Activated CD8-positive, alpha-beta T cell treated with anti-CD3 and anti-CD28 coated beads for 36 hours (primary cell): ENCODE measurements at regions of chr11 and their contacts with region 1.

Region 1: DNA sequence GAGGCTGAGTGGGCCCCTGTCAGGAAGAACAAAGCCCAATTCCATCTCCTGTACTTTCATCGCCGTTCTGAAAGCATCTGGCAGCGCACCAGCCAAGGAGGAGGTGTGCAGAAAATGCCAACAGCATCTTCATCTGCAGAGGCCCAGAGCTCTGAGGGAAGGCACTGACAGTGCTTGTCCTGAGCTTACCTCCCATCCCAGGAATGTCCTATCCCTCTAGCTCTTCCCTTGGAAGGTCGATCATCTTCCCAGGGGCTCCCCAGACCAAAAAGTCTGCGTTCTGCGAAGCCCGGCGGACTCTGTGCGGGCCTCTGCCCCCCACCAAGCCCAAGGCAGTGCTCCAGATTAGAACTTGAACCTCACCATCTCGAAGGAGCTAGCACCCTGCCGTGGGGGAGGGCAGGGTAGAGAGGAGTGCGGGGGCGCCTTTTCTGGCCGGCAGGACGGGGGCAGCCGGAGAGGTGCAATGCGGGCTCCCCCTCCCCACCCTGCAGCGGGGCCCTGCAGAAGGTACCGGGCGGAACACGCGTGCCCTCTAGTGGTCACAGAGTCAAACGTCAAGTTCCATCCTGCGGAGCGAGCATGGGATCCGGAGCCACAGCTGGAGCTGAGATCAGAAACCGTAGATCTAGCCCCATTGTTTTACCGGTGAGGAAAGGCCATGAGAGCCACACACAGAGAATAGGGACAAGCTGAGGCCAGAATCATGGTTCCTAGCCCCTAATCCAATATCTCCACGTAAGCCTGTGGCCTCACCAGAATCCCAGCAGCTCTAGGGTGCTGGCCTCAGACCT is 5.0 kb downstream of the SCN2B start:
- DNase-seq: peak; percentile 84
- ATAC-seq: peak; percentile 98
- H3K4me3 Mint-ChIP-seq: no peak overlapping the region
- H3K27ac Mint-ChIP-seq: no peak overlapping the region
- H3K4me1 Mint-ChIP-seq: peaks cover 2% of the 10 kb centered on the region
- H3K27me3 Mint-ChIP-seq: peaks cover 5% of the 10 kb centered on the region
- CTCF ChIP-seq: peak; percentile 94

Region 2: DNA sequence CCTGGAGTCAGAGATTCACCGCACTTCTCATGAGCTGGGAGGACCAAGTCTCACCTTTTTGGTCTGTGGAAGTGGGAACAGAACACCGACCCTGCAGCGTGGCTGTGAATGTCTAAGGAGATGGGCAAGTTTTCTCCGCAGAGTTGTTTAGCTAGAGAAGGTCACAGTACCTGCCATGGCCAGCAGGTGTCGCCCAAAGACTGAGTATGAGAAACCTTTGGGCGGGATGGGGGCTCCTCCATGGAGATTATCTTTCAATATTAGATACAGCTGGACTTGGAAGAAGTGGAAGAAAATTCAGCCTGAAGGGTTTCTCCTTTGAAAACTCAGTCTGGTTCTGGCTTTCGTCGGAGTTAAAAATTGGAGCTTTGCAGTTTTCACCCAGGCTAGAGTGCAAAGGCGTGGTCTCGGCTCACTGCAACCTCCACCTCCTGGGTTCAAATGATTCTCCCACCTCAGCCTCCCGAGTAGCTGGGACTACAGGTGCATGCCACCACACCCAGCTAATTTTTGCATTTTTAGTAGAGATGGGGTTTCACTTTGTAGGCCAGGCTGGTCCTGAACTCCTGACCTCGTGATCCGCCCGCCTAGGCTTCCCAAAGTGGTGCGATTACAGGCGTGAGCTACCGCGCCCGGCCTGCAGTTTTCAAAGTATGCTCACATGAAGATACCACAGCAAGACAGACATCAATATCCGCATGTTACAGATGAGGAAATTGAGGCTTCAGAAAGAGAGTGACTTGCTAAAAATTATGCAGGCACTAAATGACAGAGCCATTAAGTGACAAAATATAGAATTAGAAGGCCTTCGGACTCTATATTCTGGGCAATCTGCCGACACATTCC is 363.8 kb before region 1 on chr11:
- CTCF ChIA-PET with region 1: interaction called, 15 read pairs
- POLR2A ChIA-PET with region 1: no interaction called
- intact Hi-C with region 1: no loop called
- DNase-seq: peak; percentile 91
- ATAC-seq: peak; percentile 74
- H3K4me3 Mint-ChIP-seq: no peak overlapping the region
- H3K27ac Mint-ChIP-seq: no peak overlapping the region
- H3K4me1 Mint-ChIP-seq: peaks cover 16% of the 10 kb centered on the region
- H3K27me3 Mint-ChIP-seq: no peaks in the 10 kb centered on the region
- CTCF ChIP-seq: peak; percentile 99

Region 3: DNA sequence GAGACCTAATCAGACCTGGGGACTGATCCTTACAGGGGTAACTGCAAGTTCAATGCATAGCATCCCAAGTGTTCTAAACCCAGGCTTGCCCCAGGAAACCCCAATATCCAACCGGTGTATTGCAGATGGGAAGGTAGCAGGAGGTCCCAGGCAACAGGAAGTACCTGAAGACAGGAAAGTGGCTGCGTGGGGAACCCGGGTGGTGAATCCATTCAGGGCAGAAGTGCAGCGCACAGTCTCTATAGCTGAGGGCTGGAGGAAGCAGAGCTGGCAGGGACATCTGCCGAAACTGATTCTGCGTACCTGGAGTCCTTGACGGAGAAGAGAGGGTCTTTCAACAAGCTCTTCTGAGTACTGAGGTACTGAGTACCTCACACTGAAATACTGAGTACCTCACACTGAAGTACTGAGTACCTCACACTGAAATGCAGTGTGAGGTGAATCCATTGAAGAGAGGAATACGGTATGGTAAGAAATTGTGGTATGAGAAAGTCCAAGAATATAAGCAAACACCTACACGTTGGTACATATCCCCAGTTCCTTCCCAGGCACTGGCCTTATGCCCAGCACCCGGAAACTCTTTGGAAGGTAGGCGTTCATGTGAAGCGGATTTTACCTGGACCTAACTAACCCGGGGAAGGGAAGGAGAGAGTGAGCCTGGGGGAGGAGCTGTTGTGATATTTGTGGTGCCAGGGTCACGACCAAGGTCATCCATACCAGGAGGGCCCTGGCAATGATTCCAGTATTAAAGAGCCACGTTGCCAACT is 38.9 kb before region 1 on chr11:
- CTCF ChIA-PET with region 1: interaction called, 16 read pairs
- POLR2A ChIA-PET with region 1: no interaction called
- intact Hi-C with region 1: no loop called
- DNase-seq: no peak
- ATAC-seq: no peak
- H3K4me3 Mint-ChIP-seq: no peak overlapping the region
- H3K27ac Mint-ChIP-seq: no peak overlapping the region
- H3K4me1 Mint-ChIP-seq: no peaks in the 10 kb centered on the region
- H3K27me3 Mint-ChIP-seq: peaks cover 9% of the 10 kb centered on the region
- CTCF ChIP-seq: no peak

Region 4: GRCh38 chr11:118145285-118146227 is 25.9 kb before region 1 on chr11:
- CTCF ChIA-PET with region 1: interaction called, 116 read pairs
- POLR2A ChIA-PET with region 1: interaction called, 5 read pairs
- intact Hi-C with region 1: no loop called
- DNase-seq: peak; percentile 96
- ATAC-seq: peak; percentile 95
- H3K4me3 Mint-ChIP-seq: peak overlapping the region; percentile 76
- H3K27ac Mint-ChIP-seq: no peak overlapping the region
- H3K4me1 Mint-ChIP-seq: peaks cover 3% of the 10 kb centered on the region
- H3K27me3 Mint-ChIP-seq: peaks cover 42% of the 10 kb centered on the region
- CTCF ChIP-seq: peak; percentile 84

Region 5: GRCh38 chr11:118186346-118187107 is 15.1 kb after region 1 on chr11:
- CTCF ChIA-PET with region 1: interaction called, 54 read pairs
- POLR2A ChIA-PET with region 1: interaction called, 4 read pairs
- intact Hi-C with region 1: no loop called
- DNase-seq: no peak
- ATAC-seq: no peak
- H3K4me3 Mint-ChIP-seq: no peak overlapping the region
- H3K27ac Mint-ChIP-seq: no peak overlapping the region
- H3K4me1 Mint-ChIP-seq: peaks cover 2% of the 10 kb centered on the region
- H3K27me3 Mint-ChIP-seq: peaks cover 8% of the 10 kb centered on the region
- CTCF ChIP-seq: no peak

Region 6: DNA sequence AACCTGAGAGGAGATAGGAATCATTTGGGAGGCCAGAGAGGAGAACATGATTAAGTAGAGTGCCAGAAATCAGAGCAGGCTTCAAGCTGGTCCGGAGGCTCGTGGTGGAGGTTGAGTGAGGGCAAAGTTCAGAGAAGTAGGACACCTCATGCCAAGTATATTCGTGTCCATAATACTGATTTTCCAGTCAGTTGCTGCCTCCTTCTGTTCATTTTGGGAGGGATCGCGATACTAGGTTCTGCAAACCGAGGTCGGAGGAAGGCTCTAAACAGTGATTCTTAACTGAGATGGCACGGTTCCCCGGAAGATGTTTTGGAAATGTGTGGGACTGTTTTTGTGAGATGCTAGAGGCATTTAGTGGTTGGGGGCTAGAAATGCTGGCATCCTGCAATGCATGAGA is 119.5 kb after region 1 on chr11:
- CTCF ChIA-PET with region 1: interaction called, 18 read pairs
- POLR2A ChIA-PET with region 1: no interaction called
- intact Hi-C with region 1: no loop called
- DNase-seq: peak; percentile 74
- ATAC-seq: peak; percentile 71
- H3K4me3 Mint-ChIP-seq: no peak overlapping the region
- H3K27ac Mint-ChIP-seq: no peak overlapping the region
- H3K4me1 Mint-ChIP-seq: peaks cover 32% of the 10 kb centered on the region
- H3K27me3 Mint-ChIP-seq: no peaks in the 10 kb centered on the region
- CTCF ChIP-seq: peak; percentile 48

Region 7: DNA sequence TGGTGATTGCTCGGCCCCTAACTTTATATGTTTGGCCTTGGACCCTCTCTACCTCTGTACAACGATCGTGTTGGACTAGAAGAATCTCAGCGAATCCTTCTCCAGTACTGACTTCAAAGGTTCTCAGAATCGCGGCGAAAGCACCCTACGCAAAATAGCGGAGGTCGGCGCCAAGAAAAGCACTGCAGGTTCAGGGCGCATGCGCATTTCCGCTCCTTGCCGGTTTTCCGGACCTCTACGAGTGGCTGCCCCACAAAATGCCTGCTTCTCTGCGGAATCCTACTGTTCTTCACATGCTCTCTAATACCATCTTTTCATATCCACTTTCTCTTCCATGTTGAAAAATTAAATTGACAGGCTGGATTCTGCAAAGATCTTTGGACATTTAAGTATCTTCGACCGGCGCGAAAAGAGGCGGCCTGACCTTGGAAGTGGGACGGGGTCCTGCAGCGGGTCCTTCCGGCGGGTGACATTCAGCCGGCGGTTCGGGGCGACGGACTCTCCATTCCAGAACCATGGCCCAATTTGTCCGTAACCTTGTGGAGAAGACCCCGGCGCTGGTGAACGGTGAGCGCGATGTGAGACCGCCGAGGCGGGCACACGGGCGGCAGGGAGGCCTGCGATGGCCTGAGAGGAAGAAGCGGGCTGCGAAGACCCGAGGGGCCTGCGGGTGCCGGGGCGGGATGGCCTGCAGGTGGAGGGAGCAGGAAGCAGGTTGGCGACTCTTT is 229.8 kb after region 1 on chr11 and contains the start of gene ATP5MG:
- CTCF ChIA-PET with region 1: interaction called, 10 read pairs
- POLR2A ChIA-PET with region 1: no interaction called
- intact Hi-C with region 1: no loop called
- DNase-seq: peak; percentile 96
- ATAC-seq: peak; percentile 70
- H3K4me3 Mint-ChIP-seq: peak within 1 kb of the TSS; percentile 86
- H3K27ac Mint-ChIP-seq: peak within 1 kb of the TSS; percentile 99
- H3K4me1 Mint-ChIP-seq: peaks cover 54% of the 10 kb centered on the region
- H3K27me3 Mint-ChIP-seq: no peaks in the 10 kb centered on the region
- CTCF ChIP-seq: no peak
- total RNA-seq, gene ATP5MG: 237 to 249 TPM